Activated CD4-positive, alpha-beta T cell treated with anti-CD3 and anti-CD28 coated beads for 36 hours (primary cell): ENCODE measurements at regions of chr12 and their contacts with region 1.

Region 1: GRCh38 chr12:121888478-121889266 is at the start of gene PSMD9:
- DNase-seq: peak; percentile 99
- ATAC-seq: peak; percentile 94
- H3K4me3 Mint-ChIP-seq: peak within 1 kb of the TSS; percentile 89
- H3K27ac Mint-ChIP-seq: peak within 1 kb of the TSS; percentile 98
- H3K4me1 Mint-ChIP-seq: peaks cover 33% of the 10 kb centered on the region
- H3K27me3 Mint-ChIP-seq: no peaks in the 10 kb centered on the region
- total RNA-seq, gene PSMD9: 50.4 to 56.2 TPM

Region 2: DNA sequence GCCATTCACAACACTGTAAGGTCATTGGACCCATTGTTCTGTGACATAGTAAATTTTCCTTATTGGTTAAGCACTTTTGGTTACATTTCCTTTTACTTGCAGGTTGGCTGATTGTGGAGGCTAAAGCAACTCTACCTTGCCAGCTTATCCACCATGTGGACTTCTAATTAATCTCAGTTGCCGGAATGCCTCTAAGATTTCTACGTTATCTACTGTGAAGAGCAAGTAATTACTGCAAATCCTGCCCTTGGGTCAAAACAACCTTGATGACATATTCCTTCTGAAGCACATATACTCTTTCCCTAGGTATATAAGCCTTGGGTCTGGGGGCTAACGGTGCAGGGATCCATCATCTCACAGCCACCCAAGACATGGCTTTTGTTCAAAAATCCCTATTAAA is 199.7 kb before region 1 on chr12:
- CTCF ChIA-PET with region 1: interaction called, 4 read pairs
- POLR2A ChIA-PET with region 1: no interaction called
- intact Hi-C with region 1: loop called (anchors 1 to 5 kb)
- DNase-seq: no peak
- ATAC-seq: no peak
- H3K4me3 Mint-ChIP-seq: no peak overlapping the region
- H3K27ac Mint-ChIP-seq: no peak overlapping the region
- H3K4me1 Mint-ChIP-seq: peaks cover 7% of the 10 kb centered on the region
- H3K27me3 Mint-ChIP-seq: no peaks in the 10 kb centered on the region

Region 3: GRCh38 chr12:121712461-121713256 is 176.0 kb before region 1 on chr12 and contains the start of gene TMEM120B:
- CTCF ChIA-PET with region 1: interaction called, 9 read pairs
- POLR2A ChIA-PET with region 1: no interaction called
- intact Hi-C with region 1: loop called in 1 of 2 experiments (anchors 1 kb)
- DNase-seq: peak; percentile 90
- ATAC-seq: peak; percentile 87
- H3K4me3 Mint-ChIP-seq: peak within 1 kb of the TSS; percentile 95
- H3K27ac Mint-ChIP-seq: peak within 1 kb of the TSS; percentile 91
- H3K4me1 Mint-ChIP-seq: peaks cover 16% of the 10 kb centered on the region
- H3K27me3 Mint-ChIP-seq: no peaks in the 10 kb centered on the region
- total RNA-seq, gene TMEM120B: 8.8 to 11.7 TPM

Region 4: GRCh38 chr12:121802846-121803630 is 85.6 kb before region 1 on chr12:
- CTCF ChIA-PET with region 1: interaction called, 82 read pairs
- POLR2A ChIA-PET with region 1: no interaction called
- intact Hi-C with region 1: loop called in 1 of 2 experiments (anchors 1 kb)
- DNase-seq: peak; percentile 95
- ATAC-seq: peak; percentile 62
- H3K4me3 Mint-ChIP-seq: peak overlapping the region; percentile 88
- H3K27ac Mint-ChIP-seq: peak overlapping the region; percentile 99
- H3K4me1 Mint-ChIP-seq: peaks cover 30% of the 10 kb centered on the region
- H3K27me3 Mint-ChIP-seq: no peaks in the 10 kb centered on the region

Region 5: GRCh38 chr12:121839106-121839992 is 49.3 kb before region 1 on chr12:
- CTCF ChIA-PET with region 1: interaction called, 3 read pairs
- POLR2A ChIA-PET with region 1: interaction called, 3 read pairs
- intact Hi-C with region 1: loop called (anchors 1 kb)
- DNase-seq: peak; percentile 100
- ATAC-seq: peak; percentile 94
- H3K4me3 Mint-ChIP-seq: peak overlapping the region; percentile 91
- H3K27ac Mint-ChIP-seq: peak overlapping the region; percentile 91
- H3K4me1 Mint-ChIP-seq: peaks cover 14% of the 10 kb centered on the region
- H3K27me3 Mint-ChIP-seq: no peaks in the 10 kb centered on the region

Region 6: DNA sequence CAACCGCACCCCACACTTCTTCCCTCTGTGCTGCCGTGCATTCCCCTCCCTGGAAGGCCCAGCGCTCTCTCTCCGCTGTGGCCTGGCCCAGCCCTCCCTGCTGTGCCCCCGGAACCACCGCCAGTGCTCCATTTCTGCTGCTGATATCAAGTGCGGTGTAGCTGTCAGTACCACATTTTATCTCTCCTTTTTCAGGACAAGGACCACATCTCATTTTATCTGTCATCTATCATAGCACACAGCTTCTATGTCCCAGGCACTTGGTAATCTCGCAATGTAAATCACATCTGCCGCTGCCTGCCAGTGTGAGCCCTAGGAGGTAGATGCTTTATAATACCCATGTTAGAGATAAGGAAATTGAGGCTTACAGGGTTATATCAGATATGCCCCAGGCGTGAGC is 267.0 kb after region 1 on chr12:
- CTCF ChIA-PET with region 1: no interaction called
- POLR2A ChIA-PET with region 1: no interaction called
- intact Hi-C with region 1: no loop called
- DNase-seq: no peak
- ATAC-seq: no peak
- H3K4me3 Mint-ChIP-seq: no peak overlapping the region
- H3K27ac Mint-ChIP-seq: no peak overlapping the region
- H3K4me1 Mint-ChIP-seq: no peaks in the 10 kb centered on the region
- H3K27me3 Mint-ChIP-seq: no peaks in the 10 kb centered on the region

Region 7: DNA sequence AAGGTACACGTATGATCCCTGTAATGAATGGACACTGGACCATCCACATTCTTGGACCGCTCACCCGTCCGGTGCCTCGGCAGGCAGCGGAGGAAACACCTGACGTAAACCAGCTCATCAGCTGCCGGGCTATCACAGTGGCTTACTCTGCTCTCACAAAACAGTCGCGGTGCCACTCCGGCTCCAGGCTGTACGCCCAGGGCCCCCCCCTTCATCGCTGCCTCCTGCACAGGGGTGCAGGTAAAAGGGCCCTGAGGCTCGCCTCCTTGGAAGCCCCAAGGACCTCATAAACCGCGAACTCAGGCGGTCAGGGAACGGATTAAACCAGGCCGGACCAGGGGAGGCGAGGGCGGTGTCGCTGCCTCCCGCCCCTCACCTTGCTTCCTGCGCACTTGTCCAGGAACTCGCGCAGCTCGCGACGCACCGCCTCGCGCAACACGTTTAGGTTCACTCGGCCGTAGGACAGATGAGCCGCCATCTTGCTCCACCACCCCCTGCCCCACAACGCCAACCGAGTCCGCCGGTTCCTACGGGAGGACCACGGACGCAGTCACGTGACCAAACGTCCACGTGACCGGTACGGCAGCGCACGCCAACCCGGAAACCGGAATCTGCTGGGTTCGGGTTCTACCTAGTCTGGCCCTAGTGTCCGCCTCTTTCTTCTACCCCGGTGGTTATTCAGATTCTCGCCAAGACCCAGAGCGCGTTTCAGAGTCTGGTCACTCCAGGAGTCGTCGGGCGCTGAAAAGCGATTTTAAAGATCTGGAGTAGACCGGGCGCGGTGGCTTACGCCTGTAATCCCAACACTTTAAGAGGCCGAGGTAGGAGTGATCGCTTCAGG is 377.5 kb after region 1 on chr12 and contains the start of gene VPS33A:
- CTCF ChIA-PET with region 1: no interaction called
- POLR2A ChIA-PET with region 1: no interaction called
- intact Hi-C with region 1: loop called in 1 of 2 experiments (anchors 2 kb)
- DNase-seq: peak; percentile 98
- ATAC-seq: peak; percentile 86
- H3K4me3 Mint-ChIP-seq: peak within 1 kb of the TSS; percentile 97
- H3K27ac Mint-ChIP-seq: peak within 1 kb of the TSS; percentile 98
- H3K4me1 Mint-ChIP-seq: peaks cover 23% of the 10 kb centered on the region
- H3K27me3 Mint-ChIP-seq: no peaks in the 10 kb centered on the region
- total RNA-seq, gene VPS33A: 24.8 to 26.4 TPM